ENCODE measurements at regions of chr10 and their contacts with region 1.

Region 1: GRCh38 chr10:116947842-116948529 is 57.0 kb downstream of the SHTN1 start:
- DNase-seq: peak; percentile 12
- H3K4me3 ChIP-seq: no peak overlapping the region
- H3K27ac ChIP-seq: peak overlapping the region; percentile 16
- H3K4me1 ChIP-seq: peaks cover 18% of the 10 kb centered on the region
- H3K27me3 ChIP-seq: no peaks in the 10 kb centered on the region
- CTCF ChIP-seq: no peak

Region 2: GRCh38 chr10:116849248-116850057 is 98.5 kb before region 1 on chr10 and contains the start of gene ENO4:
- CTCF ChIA-PET with region 1: no interaction called
- dilution Hi-C with region 1: loop called (anchors 5 kb)
- in situ Hi-C with region 1: no loop called
- intact Hi-C with region 1: no loop called
- DNase-seq: peak; percentile 80
- H3K4me3 ChIP-seq: peak within 1 kb of the TSS; percentile 72 to 82 (median 77)
- H3K27ac ChIP-seq: peak within 1 kb of the TSS; percentile 49
- H3K4me1 ChIP-seq: peaks cover 24% of the 10 kb centered on the region
- H3K27me3 ChIP-seq: no peaks in the 10 kb centered on the region
- CTCF ChIP-seq: no peak
- total RNA-seq, gene ENO4: not detected

Region 3: DNA sequence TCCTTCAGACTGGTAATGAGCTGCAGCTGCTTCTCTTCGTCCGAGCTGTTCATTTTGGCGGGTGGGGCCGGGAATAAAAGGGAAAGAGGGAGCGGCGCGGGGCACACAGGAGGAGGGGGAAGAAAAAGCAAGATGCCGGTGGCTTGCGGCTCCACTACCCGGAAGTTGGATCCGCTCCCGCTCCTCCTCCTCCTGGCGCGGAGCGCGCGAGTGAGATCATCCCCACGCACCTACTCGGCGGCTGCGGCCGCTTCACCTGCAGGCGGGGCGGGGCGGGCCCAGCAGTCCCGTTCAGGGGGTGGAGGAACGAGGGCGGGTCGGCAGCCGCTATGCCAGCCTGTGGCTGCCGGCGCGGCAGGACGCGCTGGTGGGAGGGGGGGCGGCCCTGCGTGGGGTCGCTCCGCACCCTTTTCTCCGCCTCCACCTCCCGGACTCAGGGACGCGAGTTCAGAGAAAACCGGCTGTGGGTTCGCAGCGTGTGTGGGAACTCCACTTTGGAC is 57.1 kb after region 1 on chr10 and contains the start of gene SHTN1:
- CTCF ChIA-PET with region 1: no interaction called
- dilution Hi-C with region 1: no loop called
- in situ Hi-C with region 1: no loop called
- intact Hi-C with region 1: loop called (anchors 5 kb)
- DNase-seq: peak; percentile 75
- H3K4me3 ChIP-seq: peak within 1 kb of the TSS; percentile 63 to 93 (median 66)
- H3K27ac ChIP-seq: peak within 1 kb of the TSS; percentile 69
- H3K4me1 ChIP-seq: peaks cover 13% of the 10 kb centered on the region
- H3K27me3 ChIP-seq: no peaks in the 10 kb centered on the region
- CTCF ChIP-seq: no peak
- total RNA-seq, gene SHTN1: 6.0 to 27.8 TPM

Measured in mammary epithelial cell (primary cell).